Activated CD8-positive, alpha-beta memory T cell treated with anti-CD3 and anti-CD28 coated beads, Interleukin-2, amount 10 ng/mL, durations not matched to agents 7 days and 5 days (primary cell): ENCODE measurements at regions of chr15 and their contacts with region 1.

Region 1: GRCh38 chr15:63048115-63048775 is 5.7 kb downstream of the TPM1 start:
- DNase-seq: peak; percentile 84
- ATAC-seq: peak; percentile 90
- H3K4me3 Mint-ChIP-seq: peak overlapping the region; percentile 81
- H3K27ac Mint-ChIP-seq: no peak overlapping the region
- H3K4me1 Mint-ChIP-seq: peaks cover 22% of the 10 kb centered on the region
- H3K27me3 Mint-ChIP-seq: peaks cover 68% of the 10 kb centered on the region

Region 2: DNA sequence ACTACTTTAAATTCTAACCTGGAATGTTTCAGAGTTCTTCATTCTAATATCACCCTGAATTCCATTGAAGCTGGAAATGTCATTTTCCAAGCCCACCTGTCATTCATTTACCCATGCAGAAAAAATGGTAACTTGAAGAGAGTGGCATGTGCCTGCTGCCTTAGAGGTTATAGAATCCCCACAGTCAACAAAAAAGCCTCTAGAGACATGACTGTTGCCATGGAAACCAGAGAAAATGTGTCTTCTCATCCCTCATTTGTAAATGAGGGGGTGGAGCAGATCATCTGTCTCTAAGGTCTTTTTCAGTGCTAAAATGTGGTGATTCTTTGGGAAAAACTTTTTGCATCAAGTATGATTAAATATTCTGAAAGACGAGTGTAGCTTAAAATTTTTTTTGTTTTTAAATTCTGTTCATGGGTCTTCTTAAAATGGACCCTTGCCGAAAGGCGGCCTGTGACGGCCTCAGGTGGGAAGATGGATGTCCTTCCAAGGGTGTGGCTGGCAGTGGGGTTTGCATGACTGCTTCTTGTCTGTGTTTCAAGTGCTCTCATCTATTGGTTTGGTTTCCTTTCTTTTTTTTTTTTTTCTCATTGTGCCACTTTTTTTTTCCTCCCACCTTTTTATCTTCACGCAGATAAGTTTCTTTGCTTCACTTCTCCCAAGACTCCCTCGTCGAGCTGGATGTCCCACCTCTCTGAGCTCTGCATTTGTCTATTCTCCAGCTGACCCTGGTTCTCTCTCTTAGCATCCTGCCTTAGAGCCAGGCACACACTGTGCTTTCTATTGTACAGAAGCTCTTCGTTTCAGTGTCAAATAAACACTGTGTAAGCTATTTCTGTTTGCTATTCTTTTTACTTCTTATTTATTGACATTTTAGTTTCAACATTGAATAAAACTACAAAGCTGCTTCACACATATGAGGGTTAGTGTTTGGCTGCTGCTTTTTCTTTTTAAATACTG is 17.3 kb after region 1 on chr15:
- CTCF ChIA-PET with region 1: interaction called, 38 read pairs
- DNase-seq: no peak
- ATAC-seq: no peak
- H3K4me3 Mint-ChIP-seq: no peak overlapping the region
- H3K27ac Mint-ChIP-seq: no peak overlapping the region
- H3K4me1 Mint-ChIP-seq: peaks cover 4% of the 10 kb centered on the region
- H3K27me3 Mint-ChIP-seq: no peaks in the 10 kb centered on the region

Region 3: DNA sequence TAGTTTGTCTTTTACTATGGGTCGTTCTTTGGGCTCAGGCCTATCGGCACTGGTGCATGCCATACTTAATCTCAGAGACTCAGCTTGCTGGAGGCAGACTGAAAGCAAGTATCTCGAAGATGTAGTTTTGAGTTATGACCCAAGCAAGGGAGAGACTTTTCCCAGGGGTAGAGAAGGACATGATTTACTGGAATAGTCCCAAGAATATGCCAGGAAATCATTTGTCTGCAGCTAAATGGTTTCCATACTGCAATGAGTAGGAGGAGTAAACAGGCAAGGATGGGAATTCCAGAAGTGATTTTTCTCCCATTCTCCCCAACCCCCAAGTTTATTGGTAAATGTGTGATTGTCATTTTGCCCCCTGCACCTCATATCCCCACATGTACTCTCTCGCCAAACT is 38.0 kb after region 1 on chr15:
- CTCF ChIA-PET with region 1: interaction called, 119 read pairs
- DNase-seq: no peak
- ATAC-seq: no peak
- H3K4me3 Mint-ChIP-seq: no peak overlapping the region
- H3K27ac Mint-ChIP-seq: no peak overlapping the region
- H3K4me1 Mint-ChIP-seq: peaks cover 1% of the 10 kb centered on the region
- H3K27me3 Mint-ChIP-seq: peaks cover under 1% of the 10 kb centered on the region

Region 4: DNA sequence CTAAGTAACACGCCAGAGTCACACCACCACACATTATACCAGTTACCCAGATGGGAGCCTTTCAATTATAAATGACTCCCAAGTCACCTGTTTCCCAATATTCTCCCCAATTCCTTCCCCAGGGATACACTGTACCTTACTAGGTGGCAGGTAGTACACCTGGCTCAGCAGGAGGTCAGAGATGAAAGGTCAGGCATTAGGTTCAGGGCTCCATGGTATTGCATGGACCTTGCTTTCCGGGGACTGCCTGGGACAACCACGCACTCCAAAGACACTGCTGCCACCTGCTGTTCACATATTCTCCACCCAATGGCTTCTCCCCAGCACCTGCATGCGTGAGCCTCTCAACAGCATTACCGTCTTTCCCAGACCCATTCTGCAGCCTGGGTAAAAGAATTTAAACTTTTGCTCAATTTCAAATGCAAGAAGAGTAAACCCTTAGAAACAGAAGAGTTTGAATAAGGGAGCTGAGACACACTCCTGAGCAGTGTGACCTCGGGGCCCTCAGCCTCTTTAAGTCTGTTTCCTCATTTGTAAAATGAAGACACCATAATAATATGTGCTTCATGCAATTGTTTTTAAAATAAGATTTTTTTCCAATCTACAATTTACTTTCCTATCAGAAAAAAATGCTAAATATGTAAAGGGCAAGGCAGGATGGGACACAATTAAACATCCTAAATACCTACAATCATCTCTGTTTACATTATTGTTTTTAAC is 45.4 kb after region 1 on chr15:
- CTCF ChIA-PET with region 1: interaction called, 119 read pairs
- DNase-seq: peak; percentile 81
- ATAC-seq: peak; percentile 97
- H3K4me3 Mint-ChIP-seq: no peak overlapping the region
- H3K27ac Mint-ChIP-seq: no peak overlapping the region
- H3K4me1 Mint-ChIP-seq: peaks cover 11% of the 10 kb centered on the region
- H3K27me3 Mint-ChIP-seq: peaks cover 5% of the 10 kb centered on the region

Region 5: DNA sequence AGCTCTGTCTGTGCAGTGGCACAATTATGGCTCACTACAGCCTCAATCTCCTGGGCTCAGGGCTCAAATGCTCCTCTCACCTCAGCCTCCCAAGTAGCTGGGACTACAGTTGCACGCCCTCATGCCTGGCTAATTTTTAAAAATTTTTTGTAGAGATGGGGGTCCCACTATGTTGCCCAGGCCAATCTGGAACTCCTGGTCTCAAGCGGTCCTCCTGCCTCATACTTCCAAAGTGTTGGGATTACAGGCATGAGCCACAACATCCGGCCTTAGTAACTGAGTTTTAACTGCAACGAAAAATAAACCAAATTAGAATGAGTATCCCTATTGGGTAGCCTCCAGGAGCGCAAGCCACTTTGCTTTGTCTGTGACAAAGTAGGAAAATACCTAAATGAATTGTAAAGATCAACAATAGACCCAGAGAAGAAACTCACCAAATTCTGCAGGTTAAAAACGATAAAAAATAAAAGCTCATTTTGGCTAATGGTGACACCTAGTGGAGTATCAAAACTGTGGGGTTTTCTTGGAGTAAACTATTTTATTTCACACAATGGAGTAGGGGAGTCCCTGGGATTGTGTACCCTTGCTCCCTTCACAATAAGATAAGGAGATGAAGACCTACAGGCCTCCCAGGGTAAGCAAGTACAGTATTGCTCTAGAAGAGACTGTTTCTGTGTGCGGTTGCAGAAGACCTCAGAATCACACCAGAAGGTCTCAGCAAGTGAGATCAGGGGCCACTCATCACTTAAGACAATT is 354.4 kb after region 1 on chr15:
- CTCF ChIA-PET with region 1: interaction called, 19 read pairs
- DNase-seq: no peak
- ATAC-seq: peak; percentile 63
- H3K4me3 Mint-ChIP-seq: no peak overlapping the region
- H3K27ac Mint-ChIP-seq: no peak overlapping the region
- H3K4me1 Mint-ChIP-seq: peaks cover 18% of the 10 kb centered on the region
- H3K27me3 Mint-ChIP-seq: no peaks in the 10 kb centered on the region